HepG2 (cell line): ENCODE measurements at regions of chr17 and their contacts with region 1.

Region 1: GRCh38 chr17:68600067-68600930 is 868 bp downstream of the FAM20A start:
- DNase-seq: peak; percentile 59
- ATAC-seq: peak; percentile 88
- H3K4me3 ChIP-seq: peak overlapping the region; percentile 60 to 79 (median 61)
- H3K27ac ChIP-seq: peak overlapping the region; percentile 77
- H3K4me1 ChIP-seq: peaks cover 57% of the 10 kb centered on the region
- H3K27me3 ChIP-seq: peaks cover 3 to 11% of the 10 kb centered on the region in 2 experiments; a peak in 1 of 5 replicates
- CTCF ChIP-seq: peak; percentile 92
- EP300 ChIP-seq: no peak
- POLR2A ChIP-seq: peak in 1 of 2 experiments; percentile 9; a peak in 2 of 4 replicates
- RAD21 ChIP-seq: peak; percentile 91

Region 2: DNA sequence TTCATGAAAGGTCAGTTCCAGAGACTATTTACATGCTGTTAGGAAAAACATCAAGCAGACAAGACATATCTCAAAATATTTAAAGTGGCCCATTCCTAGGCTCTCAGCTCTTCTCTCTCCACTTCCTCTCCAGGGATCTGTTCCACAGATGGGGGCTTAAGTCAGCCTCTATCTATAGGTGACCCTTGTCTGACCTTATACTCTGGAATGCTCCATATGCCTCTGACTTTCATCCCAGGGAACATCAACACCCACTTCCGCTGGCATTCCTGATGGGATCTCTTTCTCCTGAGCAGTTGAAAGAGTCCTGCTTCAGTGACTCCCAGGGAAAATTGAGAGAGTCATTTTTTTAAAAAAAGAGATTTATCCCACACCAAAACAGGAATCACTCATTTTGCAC is 131.5 kb before region 1 on chr17:
- CTCF ChIA-PET with region 1: no interaction called
- POLR2A ChIA-PET with region 1: interaction called, 4 read pairs
- in situ Hi-C with region 1: no loop called
- intact Hi-C with region 1: loop called (anchors 5 kb)
- DNase-seq: peak; percentile 76
- ATAC-seq: no peak
- H3K4me3 ChIP-seq: no peak overlapping the region
- H3K27ac ChIP-seq: no peak overlapping the region
- H3K4me1 ChIP-seq: peaks cover 40% of the 10 kb centered on the region
- H3K27me3 ChIP-seq: no peaks in the 10 kb centered on the region
- CTCF ChIP-seq: no peak
- EP300 ChIP-seq: no peak
- POLR2A ChIP-seq: no peak
- RAD21 ChIP-seq: no peak

Region 3: DNA sequence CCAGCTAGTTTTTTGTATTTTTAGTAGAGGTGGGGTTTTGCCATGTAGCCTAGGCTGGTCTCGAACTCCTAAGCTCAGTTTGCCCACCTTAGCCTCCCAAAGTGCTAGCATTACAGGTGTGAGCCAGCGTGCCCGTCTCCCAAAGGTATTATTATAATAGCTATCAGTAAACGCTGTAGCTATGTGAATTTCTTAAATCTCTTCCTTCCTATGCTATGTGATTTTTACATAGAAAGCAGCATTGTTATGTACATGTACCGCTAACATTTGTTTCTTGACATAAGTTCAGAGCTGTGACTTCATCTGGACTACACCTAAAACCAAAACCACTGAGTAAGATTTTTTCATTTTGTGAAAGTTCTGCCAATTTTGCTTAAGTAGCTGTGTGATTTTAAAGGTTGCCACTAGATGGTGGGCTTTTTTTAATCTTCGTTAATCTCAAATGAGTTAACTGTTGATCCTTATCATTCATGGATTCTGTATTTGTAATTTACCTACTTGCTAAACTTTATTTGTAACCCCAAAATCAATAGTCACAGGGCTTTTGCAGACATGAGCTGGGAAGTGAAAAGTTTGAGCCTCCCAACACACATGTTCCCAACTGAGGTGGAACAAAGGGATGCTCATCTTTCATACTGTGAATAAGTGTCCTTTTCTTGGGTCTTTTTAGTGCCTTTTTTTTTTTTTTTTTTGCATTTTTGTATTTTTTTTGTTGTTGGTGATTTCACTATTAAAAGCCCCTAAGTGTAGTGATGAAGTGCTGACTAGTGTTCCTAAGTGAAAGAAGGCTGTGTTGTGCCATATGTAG is 66.2 kb before region 1 on chr17:
- CTCF ChIA-PET with region 1: interaction called, 6 read pairs
- POLR2A ChIA-PET with region 1: interaction called, 4 read pairs
- in situ Hi-C with region 1: no loop called
- intact Hi-C with region 1: loop called (anchors 2 kb)
- DNase-seq: no peak
- ATAC-seq: no peak
- H3K4me3 ChIP-seq: no peak overlapping the region
- H3K27ac ChIP-seq: no peak overlapping the region
- H3K4me1 ChIP-seq: peaks cover 18% of the 10 kb centered on the region
- H3K27me3 ChIP-seq: no peaks in the 10 kb centered on the region
- CTCF ChIP-seq: 0 out of 2 replicates have a peak, but pooled peaks have one; percentile 34
- EP300 ChIP-seq: no peak
- POLR2A ChIP-seq: no peak; a peak in 1 of 4 replicates
- RAD21 ChIP-seq: no peak

Region 4: GRCh38 chr17:68576811-68577496 is 23.3 kb before region 1 on chr17:
- CTCF ChIA-PET with region 1: no interaction called
- POLR2A ChIA-PET with region 1: interaction called, 22 read pairs
- in situ Hi-C with region 1: no loop called
- intact Hi-C with region 1: no loop called
- DNase-seq: no peak
- ATAC-seq: peak; percentile 22
- H3K4me3 ChIP-seq: no peak overlapping the region
- H3K27ac ChIP-seq: no peak overlapping the region
- H3K4me1 ChIP-seq: peaks cover 30% of the 10 kb centered on the region
- H3K27me3 ChIP-seq: no peaks in the 10 kb centered on the region
- CTCF ChIP-seq: no peak
- EP300 ChIP-seq: no peak
- POLR2A ChIP-seq: no peak
- RAD21 ChIP-seq: no peak

Region 5: DNA sequence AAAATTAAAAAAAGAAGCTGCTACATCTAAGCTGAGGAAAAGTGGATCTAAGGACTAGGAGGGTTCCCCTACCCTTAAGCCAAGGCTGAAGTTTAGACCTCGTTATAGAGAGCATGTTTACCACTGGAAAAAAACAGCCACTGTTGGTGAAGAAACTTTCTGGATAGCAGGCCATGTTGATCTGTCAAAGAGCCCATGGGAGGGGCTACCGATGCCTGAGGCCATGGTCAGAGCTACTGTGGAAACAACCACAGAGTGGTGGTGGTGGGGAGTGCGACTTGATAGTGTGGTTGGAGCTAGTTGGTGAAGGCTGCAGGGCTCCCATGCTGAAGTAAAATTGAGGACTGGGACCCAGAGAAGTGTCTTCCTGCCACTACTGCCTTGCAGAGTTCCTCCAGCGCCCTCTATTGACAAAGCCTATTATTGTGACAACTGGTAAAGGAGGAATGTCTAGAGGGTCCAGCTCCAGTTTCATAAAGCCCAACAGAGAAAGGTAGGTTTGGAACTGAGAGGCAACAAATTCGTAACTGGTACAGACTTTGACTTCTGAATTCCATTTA is 13.5 kb after region 1 on chr17:
- CTCF ChIA-PET with region 1: no interaction called
- POLR2A ChIA-PET with region 1: interaction called, 27 read pairs
- in situ Hi-C with region 1: no loop called
- intact Hi-C with region 1: no loop called
- DNase-seq: peak; percentile 86
- ATAC-seq: peak; percentile 92
- H3K4me3 ChIP-seq: peak overlapping the region in 2 of 3 experiments; percentile 23 to 47; a peak in 2 of 6 replicates
- H3K27ac ChIP-seq: peak overlapping the region; percentile 37
- H3K4me1 ChIP-seq: peaks cover 35% of the 10 kb centered on the region
- H3K27me3 ChIP-seq: no peaks in the 10 kb centered on the region; a peak in 1 of 5 replicates
- CTCF ChIP-seq: peak; percentile 94
- EP300 ChIP-seq: no peak; a peak in 1 of 4 replicates
- POLR2A ChIP-seq: no peak
- RAD21 ChIP-seq: peak; percentile 85

Region 6: DNA sequence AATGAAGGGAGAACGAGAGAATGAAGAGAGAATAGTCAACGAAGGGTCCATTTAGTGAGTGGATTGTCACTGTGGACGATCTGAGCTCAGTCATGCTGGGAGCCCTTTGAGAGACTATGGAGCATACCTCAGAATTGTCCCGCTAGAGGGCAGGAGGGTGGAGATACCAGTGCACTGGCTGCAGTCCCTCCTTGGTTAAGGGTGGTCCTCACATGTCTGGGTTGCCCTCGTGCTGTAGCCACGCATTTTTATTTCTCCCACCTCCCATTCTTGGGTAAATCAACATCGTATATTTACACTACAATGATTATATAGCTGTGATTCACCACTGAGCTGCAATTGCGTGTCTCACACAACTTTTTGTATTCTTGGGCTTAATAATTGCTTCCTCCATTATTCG is 34.1 kb after region 1 on chr17:
- CTCF ChIA-PET with region 1: no interaction called
- POLR2A ChIA-PET with region 1: no interaction called
- in situ Hi-C with region 1: no loop called
- intact Hi-C with region 1: no loop called
- DNase-seq: peak; percentile 18
- ATAC-seq: peak; percentile 86
- H3K4me3 ChIP-seq: no peak overlapping the region
- H3K27ac ChIP-seq: no peak overlapping the region
- H3K4me1 ChIP-seq: no peaks in the 10 kb centered on the region
- H3K27me3 ChIP-seq: no peaks in the 10 kb centered on the region; a peak in 3 of 5 replicates
- CTCF ChIP-seq: peak; percentile 60
- EP300 ChIP-seq: no peak
- POLR2A ChIP-seq: no peak
- RAD21 ChIP-seq: no peak

Region 7: GRCh38 chr17:68646701-68647104 is 46.4 kb after region 1 on chr17:
- CTCF ChIA-PET with region 1: no interaction called
- POLR2A ChIA-PET with region 1: no interaction called
- in situ Hi-C with region 1: no loop called
- intact Hi-C with region 1: no loop called
- DNase-seq: no peak
- ATAC-seq: no peak
- H3K4me3 ChIP-seq: no peak overlapping the region
- H3K27ac ChIP-seq: no peak overlapping the region
- H3K4me1 ChIP-seq: no peaks in the 10 kb centered on the region
- H3K27me3 ChIP-seq: peaks cover under 1 to 3% of the 10 kb centered on the region in 2 experiments; a peak in 2 of 5 replicates
- CTCF ChIP-seq: no peak
- EP300 ChIP-seq: no peak
- POLR2A ChIP-seq: no peak
- RAD21 ChIP-seq: no peak